GM13976 (cell line): ENCODE measurements at regions of chr22 and their contacts with region 1.

Region 1: GRCh38 chr22:41237707-41238569 is 2.8 kb downstream of the CHADL start:
- DNase-seq: peak; percentile 93
- CTCF ChIP-seq: peak; percentile 87

Region 2: GRCh38 chr22:40877488-40877887 is 360.4 kb before region 1 on chr22:
- in situ Hi-C with region 1: no loop called
- DNase-seq: no peak
- CTCF ChIP-seq: no peak

Region 3: GRCh38 chr22:40922484-40923303 is 315.2 kb before region 1 on chr22:
- in situ Hi-C with region 1: loop called (anchors 10 kb)
- DNase-seq: peak; percentile 56
- CTCF ChIP-seq: peak; percentile 46

Region 4: DNA sequence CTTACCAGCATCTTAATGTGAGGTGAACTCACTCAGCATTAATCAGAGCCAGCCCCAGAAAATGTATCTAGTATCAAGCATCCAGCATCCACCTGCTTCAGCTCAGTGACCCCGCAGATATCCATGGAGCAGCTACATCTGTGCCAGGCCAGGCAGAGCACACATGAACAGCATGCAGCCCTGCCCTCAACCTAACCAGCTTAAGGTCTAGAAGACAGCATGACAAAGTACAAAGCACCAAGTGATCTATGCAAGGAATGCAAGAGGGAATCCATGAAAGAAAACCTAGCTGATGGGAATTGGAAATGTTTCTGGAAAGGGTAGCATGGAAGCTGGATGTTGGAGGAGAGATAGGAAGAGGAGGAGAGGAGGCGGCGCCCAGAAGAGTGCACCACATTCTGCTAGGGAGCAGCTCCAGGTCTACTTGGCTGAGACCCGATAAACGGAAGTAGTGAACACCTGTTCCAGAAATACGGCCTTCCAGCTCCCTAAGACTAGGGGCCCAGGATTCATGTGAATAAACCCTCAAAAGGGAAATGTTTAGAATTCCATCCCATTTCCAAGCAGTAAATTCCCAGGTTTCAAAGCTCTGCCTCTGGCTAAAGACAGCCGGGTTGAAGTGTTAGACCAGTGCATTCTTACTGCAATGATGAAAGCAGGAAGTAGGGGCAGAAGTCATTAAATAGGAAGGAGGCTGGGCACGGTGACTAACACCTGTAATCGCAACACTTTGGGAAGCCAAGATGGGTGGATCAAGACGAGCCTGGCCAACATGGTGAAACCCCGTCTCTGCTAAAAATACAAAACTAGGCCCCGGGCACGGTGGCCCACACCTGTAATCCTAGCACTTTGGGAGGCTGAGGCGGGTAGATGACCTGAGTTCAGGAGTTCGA is 56.3 kb before region 1 on chr22:
- in situ Hi-C with region 1: no loop called
- DNase-seq: no peak
- CTCF ChIP-seq: no peak

Region 5: DNA sequence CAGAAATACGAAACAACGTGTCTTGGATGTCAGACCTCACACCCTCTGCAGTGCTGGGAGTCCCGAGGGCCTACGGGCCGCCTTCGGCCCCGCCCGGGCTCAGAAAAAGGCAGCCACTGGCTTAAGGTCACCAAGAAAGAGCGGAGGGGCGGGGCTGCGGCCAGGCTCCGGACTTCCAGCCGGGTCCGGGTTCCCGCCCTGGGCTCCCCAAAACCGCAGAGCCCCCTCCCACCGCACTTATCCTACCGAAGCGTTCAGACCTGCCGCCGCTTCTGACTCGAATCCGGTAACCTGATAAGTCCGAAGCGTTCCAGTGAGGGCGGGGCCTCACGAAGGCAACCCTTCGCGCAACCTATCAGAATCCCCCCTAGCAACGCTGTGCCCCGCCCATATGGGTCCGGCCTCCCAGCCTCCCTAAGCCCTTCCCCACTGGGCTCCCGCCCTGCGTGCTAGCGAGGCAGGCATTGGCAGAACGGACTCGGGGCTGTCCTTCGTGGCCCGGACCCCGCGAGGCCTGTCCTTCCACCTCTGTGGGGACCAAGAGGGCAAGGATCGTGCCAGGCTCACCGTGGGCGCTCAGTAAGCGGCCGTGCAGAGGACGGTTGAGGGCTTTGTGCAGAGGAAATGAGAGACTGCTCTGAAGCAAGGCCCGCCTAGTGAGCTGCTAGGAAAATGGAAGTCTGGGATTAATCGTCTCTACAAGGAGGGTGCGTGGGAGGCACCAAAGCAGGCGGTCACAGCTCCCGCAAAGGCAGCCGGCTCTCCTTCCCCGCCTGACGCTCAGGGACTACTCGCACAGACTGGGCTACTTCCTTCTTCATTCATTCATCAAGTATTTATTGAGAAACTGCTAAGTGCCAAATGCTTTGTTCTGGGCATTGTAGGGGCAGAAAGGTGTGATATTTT is 832.8 kb after region 1 on chr22 and contains the start of gene NAGA:
- in situ Hi-C with region 1: no loop called
- DNase-seq: peak; percentile 97
- CTCF ChIP-seq: no peak